A549 (cell line): ENCODE measurements at regions of chr17 and their contacts with region 1.

Region 1: DNA sequence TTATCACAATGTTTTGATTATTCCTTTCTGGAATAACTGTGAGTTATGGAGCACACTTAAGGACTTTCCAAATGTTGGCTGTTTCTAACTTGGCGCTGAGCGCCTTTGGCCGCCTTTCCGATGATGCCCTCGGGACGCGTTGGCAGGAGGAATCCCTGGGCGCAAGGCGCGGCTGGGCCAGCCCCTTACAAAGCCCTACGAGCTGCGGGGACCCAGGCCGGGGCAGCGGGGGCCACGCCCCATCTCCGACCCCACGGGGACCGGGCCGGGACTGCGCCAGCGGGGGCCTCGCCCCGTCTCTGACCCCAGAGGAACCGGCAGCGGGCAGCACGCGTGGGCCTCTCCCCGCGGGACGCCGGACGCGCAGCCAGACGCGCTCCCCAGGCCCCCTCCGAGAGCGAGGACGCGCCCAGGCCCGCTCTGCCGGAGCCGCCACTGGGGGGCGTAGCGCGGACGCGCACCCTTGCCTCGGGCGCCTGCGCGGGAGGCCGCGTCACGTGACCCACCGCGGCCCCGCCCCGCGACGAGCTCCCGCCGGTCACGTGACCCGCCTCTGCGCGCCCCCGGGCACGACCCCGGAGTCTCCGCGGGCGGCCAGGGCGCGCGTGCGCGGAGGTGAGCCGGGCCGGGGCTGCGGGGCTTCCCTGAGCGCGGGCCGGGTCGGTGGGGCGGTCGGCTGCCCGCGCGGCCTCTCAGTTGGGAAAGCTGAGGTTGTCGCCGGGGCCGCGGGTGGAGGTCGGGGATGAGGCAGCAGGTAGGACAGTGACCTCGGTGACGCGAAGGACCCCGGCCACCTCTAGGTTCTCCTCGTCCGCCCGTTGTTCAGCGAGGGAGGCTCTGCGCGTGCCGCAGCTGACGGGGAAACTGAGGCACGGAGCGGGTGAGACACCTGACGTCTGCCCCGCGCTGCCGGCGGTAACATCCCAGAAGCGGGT is at the start of gene GAA:
- DNase-seq: peak; percentile 84 to 91
- ATAC-seq: peak; percentile 80 to 89
- H3K4me3 ChIP-seq: peak within 1 kb of the TSS; percentile 88
- H3K27ac ChIP-seq: peak within 1 kb of the TSS; percentile 90 to 94
- H3K4me1 ChIP-seq: peaks cover 11% of the 10 kb centered on the region
- CTCF ChIP-seq: peak; percentile 99
- EP300 ChIP-seq: no peak
- POLR2A ChIP-seq: peak; percentile 93
- RAD21 ChIP-seq: peak; percentile 18 to 68; a peak in 3 of 5 replicates
- polyA plus RNA-seq, gene GAA: 5.7 and 9.5 TPM in 2 replicates

Region 2: DNA sequence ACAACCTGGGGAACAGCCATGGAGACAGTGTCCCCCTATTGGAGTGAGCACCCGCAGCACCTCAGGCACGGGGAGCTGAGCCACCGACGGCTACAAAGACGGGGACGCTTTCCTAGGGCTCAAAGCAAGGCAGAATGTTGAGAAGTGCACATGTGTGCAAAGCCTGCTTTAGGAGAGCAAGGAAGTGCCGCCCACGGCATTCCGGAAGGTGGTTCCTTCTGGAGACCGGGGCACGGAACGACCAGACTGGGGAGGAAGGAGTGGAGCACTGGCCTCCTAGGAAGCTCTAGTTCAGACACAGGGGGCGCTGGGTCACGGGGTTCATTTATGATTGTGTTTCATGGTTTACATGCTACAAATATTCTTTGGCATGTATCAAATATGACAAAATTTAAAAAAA is 117.8 kb before region 1 on chr17:
- CTCF ChIA-PET with region 1: no interaction called
- POLR2A ChIA-PET with region 1: no interaction called
- DNase-seq: no peak
- ATAC-seq: no peak
- H3K4me3 ChIP-seq: no peak overlapping the region
- H3K27ac ChIP-seq: no peak overlapping the region
- H3K4me1 ChIP-seq: peaks cover 32% of the 10 kb centered on the region
- CTCF ChIP-seq: no peak
- EP300 ChIP-seq: no peak
- POLR2A ChIP-seq: no peak
- RAD21 ChIP-seq: no peak

Region 3: GRCh38 chr17:80082403-80083135 is 18.7 kb before region 1 on chr17:
- CTCF ChIA-PET with region 1: interaction called, 176 read pairs
- POLR2A ChIA-PET with region 1: interaction called, 6 read pairs
- DNase-seq: peak; percentile 81 to 89
- ATAC-seq: peak; percentile 79 to 87
- H3K4me3 ChIP-seq: no peak overlapping the region; the same call in 2 of the 3 replicates
- H3K27ac ChIP-seq: peak overlapping the region; percentile 63 to 69
- H3K4me1 ChIP-seq: peaks cover 7% of the 10 kb centered on the region; the same call in 2 of the 3 replicates
- CTCF ChIP-seq: peak; percentile 90
- EP300 ChIP-seq: no peak
- POLR2A ChIP-seq: no peak
- RAD21 ChIP-seq: peak; percentile 84 to 86

Region 4: DNA sequence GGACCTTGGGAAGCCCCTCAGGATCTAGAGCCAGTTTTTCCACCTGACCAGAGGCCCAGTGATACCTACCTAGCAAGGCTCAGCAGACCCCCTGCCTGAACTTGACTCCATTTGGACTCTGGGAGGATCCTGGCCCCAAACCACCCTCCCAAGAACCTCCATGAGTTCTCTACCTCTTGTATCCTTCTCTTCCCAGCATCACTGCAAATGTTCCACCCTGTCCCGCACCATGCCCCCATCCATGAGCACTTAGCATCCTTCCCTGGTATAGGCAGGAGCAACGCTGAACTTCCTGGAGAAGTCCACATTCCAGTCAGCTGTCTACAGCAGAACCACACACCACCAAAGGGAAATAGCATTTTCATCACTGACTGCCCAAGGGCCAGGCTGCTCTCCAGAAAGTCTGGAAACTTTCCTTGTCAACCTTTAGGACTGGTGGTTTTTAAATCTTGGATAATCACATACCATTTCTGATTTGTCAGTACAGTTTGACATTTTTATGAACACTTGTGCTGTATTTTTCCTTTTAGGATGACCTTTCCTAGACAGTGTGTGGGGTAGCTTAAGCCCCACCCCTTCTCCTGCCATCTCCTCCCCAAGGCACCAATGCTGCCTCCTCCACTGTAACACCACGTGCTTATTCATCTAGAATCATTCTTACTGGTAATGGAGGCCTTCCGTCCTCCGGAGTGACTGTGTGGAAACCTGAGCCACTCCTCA is 31.8 kb after region 1 on chr17:
- CTCF ChIA-PET with region 1: interaction called, 60 read pairs
- POLR2A ChIA-PET with region 1: no interaction called
- DNase-seq: no peak
- ATAC-seq: peak; percentile 41 to 47; a peak in 4 of 6 replicates
- H3K4me3 ChIP-seq: no peak overlapping the region
- H3K27ac ChIP-seq: no peak overlapping the region
- H3K4me1 ChIP-seq: no peaks in the 10 kb centered on the region
- CTCF ChIP-seq: no peak
- EP300 ChIP-seq: no peak
- POLR2A ChIP-seq: no peak
- RAD21 ChIP-seq: no peak

Region 5: GRCh38 chr17:80147035-80147836 is 46.0 kb after region 1 on chr17 and contains the start of gene EIF4A3:
- CTCF ChIA-PET with region 1: interaction called, 17 read pairs
- POLR2A ChIA-PET with region 1: interaction called, 21 read pairs
- DNase-seq: peak; percentile 100
- ATAC-seq: peak; percentile 92 to 93
- H3K4me3 ChIP-seq: peak within 1 kb of the TSS; percentile 65
- H3K27ac ChIP-seq: peak within 1 kb of the TSS; percentile 92 to 95
- H3K4me1 ChIP-seq: peaks cover 26% of the 10 kb centered on the region
- CTCF ChIP-seq: no peak
- EP300 ChIP-seq: no peak
- POLR2A ChIP-seq: peak; percentile 97
- RAD21 ChIP-seq: no peak
- polyA plus RNA-seq, gene EIF4A3: 181 and 201 TPM in 2 replicates

Region 6: GRCh38 chr17:80226762-80227555 is 125.7 kb after region 1 on chr17:
- CTCF ChIA-PET with region 1: interaction called, 13 read pairs
- POLR2A ChIA-PET with region 1: no interaction called
- DNase-seq: no peak
- ATAC-seq: no peak
- H3K4me3 ChIP-seq: no peak overlapping the region
- H3K27ac ChIP-seq: no peak overlapping the region
- H3K4me1 ChIP-seq: no peaks in the 10 kb centered on the region
- CTCF ChIP-seq: no peak
- EP300 ChIP-seq: no peak
- POLR2A ChIP-seq: no peak
- RAD21 ChIP-seq: no peak

Region 7: DNA sequence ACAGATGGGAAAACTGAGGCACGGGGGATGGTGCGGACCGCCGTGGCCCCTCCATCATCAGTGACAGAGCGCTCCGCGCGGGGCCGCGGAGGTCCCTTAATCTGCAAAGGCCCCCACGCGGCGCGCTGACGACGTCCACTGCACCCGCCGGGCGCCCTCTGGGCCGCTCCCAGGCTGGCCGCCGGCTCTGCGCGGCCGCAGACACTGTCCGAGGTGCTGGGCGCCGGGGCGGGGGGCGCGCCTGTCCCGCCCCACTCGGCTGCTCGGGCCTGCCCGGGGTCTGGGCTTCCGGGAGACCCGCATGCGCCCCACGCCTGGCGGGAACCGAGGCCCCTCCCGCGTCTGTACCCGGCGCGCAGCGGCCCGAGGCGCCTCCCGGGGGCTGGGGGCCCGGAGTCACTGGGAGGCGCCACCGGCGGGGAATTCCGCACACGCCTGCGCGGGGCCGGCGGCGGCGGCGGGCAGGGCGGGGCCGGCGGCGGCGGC is 158.8 kb after region 1 on chr17:
- CTCF ChIA-PET with region 1: interaction called, 14 read pairs
- POLR2A ChIA-PET with region 1: interaction called, 8 read pairs
- DNase-seq: peak; percentile 85 to 95
- ATAC-seq: peak; percentile 76 to 78
- H3K4me3 ChIP-seq: peak overlapping the region; percentile 61
- H3K27ac ChIP-seq: peak overlapping the region; percentile 94 to 99
- H3K4me1 ChIP-seq: peaks cover 74% of the 10 kb centered on the region
- CTCF ChIP-seq: 0 out of 3 replicates have a peak, but pooled peaks have one; percentile 6
- EP300 ChIP-seq: peak in 1 of 2 experiments; percentile 25; a peak in 1 of 5 replicates
- POLR2A ChIP-seq: peak; percentile 38
- RAD21 ChIP-seq: 0 out of 5 replicates have a peak, but pooled peaks of 1 of the 2 experiments have one; percentile 18

Region 8: DNA sequence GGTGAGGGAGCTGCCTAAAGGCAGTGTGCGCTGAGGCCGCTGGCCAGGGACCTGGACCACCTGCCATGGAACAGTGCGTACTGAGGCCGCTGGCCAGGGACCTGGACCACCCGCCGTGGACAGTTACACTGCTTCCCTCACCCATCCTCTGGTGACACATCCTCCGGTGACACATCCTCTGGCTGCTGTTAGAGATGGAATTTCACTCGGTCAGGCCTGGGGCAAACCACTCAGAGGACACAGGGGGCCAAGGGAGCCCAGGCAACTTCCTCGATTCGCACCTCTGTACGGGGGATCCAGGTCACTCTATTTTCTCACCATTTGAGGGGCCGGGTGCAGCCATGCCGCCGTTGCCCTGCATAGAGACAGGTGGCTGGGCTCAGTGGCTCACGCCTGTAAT is 411.0 kb after region 1 on chr17:
- CTCF ChIA-PET with region 1: no interaction called
- POLR2A ChIA-PET with region 1: no interaction called
- DNase-seq: peak; percentile 43 to 70
- ATAC-seq: peak; percentile 61 to 75; a peak in 5 of 6 replicates
- H3K4me3 ChIP-seq: no peak overlapping the region
- H3K27ac ChIP-seq: peak overlapping the region; percentile 49 to 70
- H3K4me1 ChIP-seq: peaks cover 22% of the 10 kb centered on the region
- CTCF ChIP-seq: no peak
- EP300 ChIP-seq: no peak
- POLR2A ChIP-seq: no peak
- RAD21 ChIP-seq: no peak